ENCODE measurements at regions of chr14 and their contacts with region 1.

Region 1: DNA sequence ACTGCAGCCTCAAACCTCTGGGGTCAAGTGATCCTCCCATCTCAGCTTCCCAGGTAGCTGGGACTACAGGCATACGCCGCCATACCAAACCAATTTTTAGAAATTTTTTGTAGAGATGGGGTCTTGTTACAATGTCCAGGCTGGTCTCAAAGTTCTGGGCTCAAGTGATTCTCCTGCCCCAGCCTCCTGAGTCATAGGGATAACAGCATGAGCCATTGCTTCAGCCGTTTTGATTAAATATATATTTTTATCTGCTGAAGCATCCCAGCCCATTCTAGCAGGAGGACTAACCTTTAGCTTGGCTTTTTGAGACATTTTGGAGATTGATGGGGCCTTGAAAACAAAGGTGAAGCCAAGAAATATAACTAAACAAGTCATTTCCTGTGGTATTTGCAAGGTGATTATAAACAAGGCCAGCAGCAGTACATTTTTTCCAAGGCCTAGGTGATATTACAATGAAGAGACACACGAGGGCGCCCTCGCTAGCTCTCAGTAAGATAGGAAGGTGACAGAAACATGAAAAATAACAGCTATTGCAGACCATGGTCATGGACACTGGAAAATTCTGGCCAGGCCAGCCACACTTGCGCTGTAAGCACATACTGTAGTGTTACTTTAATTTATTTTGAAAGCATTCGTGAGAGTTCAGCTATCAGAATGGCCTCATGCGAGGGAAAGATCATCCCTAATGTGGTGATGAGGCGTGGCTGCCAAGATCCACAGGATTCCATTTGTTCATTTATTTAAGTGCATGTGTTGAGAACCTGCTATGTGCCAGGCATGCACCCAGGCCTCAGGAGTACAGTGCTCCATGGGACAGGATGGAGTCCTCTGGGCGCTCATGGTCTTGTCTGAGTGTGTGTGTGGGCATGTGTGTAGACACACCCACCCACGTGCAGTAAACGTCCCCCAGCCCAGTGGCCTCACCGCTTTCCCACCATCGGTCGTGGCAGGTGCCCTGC is 63.5 kb downstream of the DGLUCY start:
- DNase-seq: peak; percentile 82
- ATAC-seq: peak; percentile 81
- H3K4me3 Mint-ChIP-seq: no peak overlapping the region
- H3K27ac Mint-ChIP-seq: peak overlapping the region; percentile 85
- H3K4me1 Mint-ChIP-seq: peaks cover 36% of the 10 kb centered on the region
- H3K27me3 Mint-ChIP-seq: no peaks in the 10 kb centered on the region

Region 2: GRCh38 chr14:90778571-90779240 is 398.6 kb before region 1 on chr14:
- CTCF ChIA-PET with region 1: no interaction called
- POLR2A ChIA-PET with region 1: no interaction called
- DNase-seq: no peak
- ATAC-seq: no peak
- H3K4me3 Mint-ChIP-seq: no peak overlapping the region
- H3K27ac Mint-ChIP-seq: no peak overlapping the region
- H3K4me1 Mint-ChIP-seq: no peaks in the 10 kb centered on the region
- H3K27me3 Mint-ChIP-seq: no peaks in the 10 kb centered on the region

Region 3: DNA sequence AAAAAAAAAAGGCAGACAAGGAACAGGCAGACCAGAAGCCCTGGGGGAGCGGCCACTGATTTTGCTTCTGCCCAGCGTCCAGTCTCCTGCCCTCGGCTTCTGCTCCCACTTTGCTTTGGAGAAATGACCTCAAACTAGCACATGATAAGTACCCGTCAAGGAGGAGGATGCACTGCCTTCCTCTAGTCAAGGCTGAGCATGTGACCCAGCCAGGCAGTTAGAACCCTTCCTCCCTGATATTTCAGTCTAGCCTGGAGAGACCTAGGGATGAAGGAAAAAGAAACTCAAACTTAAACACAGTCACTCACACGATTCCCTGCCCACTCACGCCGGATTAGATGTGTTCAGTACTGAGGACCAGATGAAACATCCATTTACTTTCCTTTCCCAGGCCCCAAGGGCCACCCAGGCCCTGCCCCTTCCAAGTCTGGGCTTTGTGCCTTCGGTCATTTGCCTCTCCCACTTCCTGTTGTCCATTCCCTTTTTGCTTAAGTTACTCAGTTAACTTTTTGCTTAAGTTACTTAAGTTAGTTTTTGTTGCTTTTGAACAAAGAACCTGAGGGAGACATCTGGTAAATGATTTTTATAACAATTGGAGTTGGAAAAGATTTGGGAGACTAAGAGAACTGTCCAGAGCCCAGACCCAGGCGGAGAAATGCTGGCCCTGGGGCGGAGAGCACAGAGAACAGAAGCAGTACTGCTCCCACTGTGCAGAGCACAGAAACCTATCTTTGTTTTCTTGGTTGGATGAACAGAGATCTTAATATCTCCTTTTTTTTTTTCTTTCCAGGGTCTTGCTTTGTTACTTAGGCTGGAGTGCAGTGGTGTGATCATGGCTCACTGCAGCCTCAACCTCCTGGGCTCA is 338.1 kb before region 1 on chr14:
- CTCF ChIA-PET with region 1: no interaction called
- POLR2A ChIA-PET with region 1: no interaction called
- DNase-seq: no peak
- ATAC-seq: no peak
- H3K4me3 Mint-ChIP-seq: no peak overlapping the region
- H3K27ac Mint-ChIP-seq: no peak overlapping the region
- H3K4me1 Mint-ChIP-seq: peaks cover 25% of the 10 kb centered on the region
- H3K27me3 Mint-ChIP-seq: peaks cover 14% of the 10 kb centered on the region

Region 4: GRCh38 chr14:91060351-91061055 is 116.9 kb before region 1 on chr14 and contains the start of gene RPS6KA5:
- CTCF ChIA-PET with region 1: interaction called, 23 read pairs
- POLR2A ChIA-PET with region 1: interaction called, 3 read pairs
- DNase-seq: peak; percentile 100
- ATAC-seq: peak; percentile 85
- H3K4me3 Mint-ChIP-seq: peak within 1 kb of the TSS; percentile 90
- H3K27ac Mint-ChIP-seq: peak within 1 kb of the TSS; percentile 65
- H3K4me1 Mint-ChIP-seq: peaks cover 62% of the 10 kb centered on the region
- H3K27me3 Mint-ChIP-seq: no peaks in the 10 kb centered on the region
- total RNA-seq, gene RPS6KA5: 50.8 to 53.1 TPM

Region 5: DNA sequence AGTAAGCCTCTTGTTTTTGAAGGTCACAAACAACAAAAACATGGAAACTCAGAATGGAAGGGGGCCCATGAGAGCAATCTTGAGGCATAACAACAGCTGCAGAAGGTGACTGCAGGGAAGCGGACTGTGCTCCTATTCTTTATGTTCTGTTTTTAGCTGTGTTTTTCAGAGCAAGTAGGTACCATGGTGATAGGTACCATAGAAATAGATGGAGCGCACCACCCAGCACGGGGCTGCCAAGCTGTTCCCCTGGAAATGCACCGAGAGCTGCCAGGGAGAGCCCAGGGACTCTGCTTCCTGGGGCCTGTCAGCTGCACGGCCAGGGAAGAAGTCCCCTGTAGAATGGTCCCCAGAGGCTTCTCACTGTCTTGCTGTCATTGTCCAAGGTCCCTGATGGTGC is 30.7 kb before region 1 on chr14:
- CTCF ChIA-PET with region 1: interaction called, 13 read pairs
- POLR2A ChIA-PET with region 1: no interaction called
- DNase-seq: no peak
- ATAC-seq: no peak
- H3K4me3 Mint-ChIP-seq: no peak overlapping the region
- H3K27ac Mint-ChIP-seq: peak overlapping the region; percentile 52
- H3K4me1 Mint-ChIP-seq: peaks cover 61% of the 10 kb centered on the region
- H3K27me3 Mint-ChIP-seq: no peaks in the 10 kb centered on the region

Region 6: GRCh38 chr14:91244501-91244901 is 67.1 kb after region 1 on chr14 and contains the start of gene GPR68:
- CTCF ChIA-PET with region 1: interaction called, 105 read pairs
- POLR2A ChIA-PET with region 1: interaction called, 55 read pairs
- DNase-seq: peak; percentile 61
- ATAC-seq: peak; percentile 12
- H3K4me3 Mint-ChIP-seq: peak within 1 kb of the TSS; percentile 87
- H3K27ac Mint-ChIP-seq: peak within 1 kb of the TSS; percentile 93
- H3K4me1 Mint-ChIP-seq: peaks cover 74% of the 10 kb centered on the region
- H3K27me3 Mint-ChIP-seq: no peaks in the 10 kb centered on the region
- total RNA-seq, gene GPR68: 44.6 to 45.3 TPM

Region 7: DNA sequence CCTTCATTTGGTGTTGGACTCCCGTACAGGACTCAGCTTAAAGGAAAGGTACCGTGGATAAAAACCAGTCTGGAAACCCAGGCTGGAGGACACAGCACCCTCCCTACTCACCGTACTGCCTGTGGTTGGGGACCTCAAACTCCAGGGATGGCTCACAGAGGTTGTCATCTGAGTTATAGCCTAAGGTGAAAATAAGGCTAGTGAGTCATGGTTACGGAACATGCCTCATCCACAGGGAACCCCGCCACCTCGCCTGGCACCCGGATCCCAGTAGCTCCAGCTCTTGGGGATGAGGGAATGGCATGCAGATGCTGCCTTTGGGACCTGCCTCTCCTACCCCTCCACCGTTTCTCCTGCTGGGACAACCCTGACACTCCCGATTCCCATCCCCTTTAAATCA is 104.0 kb after region 1 on chr14:
- CTCF ChIA-PET with region 1: interaction called, 130 read pairs
- POLR2A ChIA-PET with region 1: interaction called, 6 read pairs
- DNase-seq: no peak
- ATAC-seq: no peak
- H3K4me3 Mint-ChIP-seq: no peak overlapping the region
- H3K27ac Mint-ChIP-seq: peak overlapping the region; percentile 47
- H3K4me1 Mint-ChIP-seq: peaks cover 43% of the 10 kb centered on the region
- H3K27me3 Mint-ChIP-seq: no peaks in the 10 kb centered on the region

Measured in activated CD8-positive, alpha-beta T cell treated with anti-CD3 and anti-CD28 coated beads, Interleukin-2, amount 10 ng/mL, durations not matched to agents 7 days and 5 days (primary cell).